CD8-positive, alpha-beta memory T cell (primary cell): ENCODE measurements at regions of chr12 and their contacts with region 1.

Region 1: GRCh38 chr12:52362118-52362726 is 5.1 kb downstream of the KRT85 start:
- DNase-seq: no peak
- H3K4me3 ChIP-seq: no peak overlapping the region
- H3K4me3 Mint-ChIP-seq: no peak overlapping the region
- H3K27ac ChIP-seq: no peak overlapping the region
- H3K27ac Mint-ChIP-seq: no peak overlapping the region
- H3K4me1 ChIP-seq: peaks cover 22% of the 10 kb centered on the region
- H3K4me1 Mint-ChIP-seq: peaks cover 28 to 48% (median 42%) of the 10 kb centered on the region in 3 donors
- H3K27me3 ChIP-seq: peaks cover 3% of the 10 kb centered on the region
- H3K27me3 Mint-ChIP-seq: peaks cover 4 to 9% of the 10 kb centered on the region in 2 donors

Region 2: DNA sequence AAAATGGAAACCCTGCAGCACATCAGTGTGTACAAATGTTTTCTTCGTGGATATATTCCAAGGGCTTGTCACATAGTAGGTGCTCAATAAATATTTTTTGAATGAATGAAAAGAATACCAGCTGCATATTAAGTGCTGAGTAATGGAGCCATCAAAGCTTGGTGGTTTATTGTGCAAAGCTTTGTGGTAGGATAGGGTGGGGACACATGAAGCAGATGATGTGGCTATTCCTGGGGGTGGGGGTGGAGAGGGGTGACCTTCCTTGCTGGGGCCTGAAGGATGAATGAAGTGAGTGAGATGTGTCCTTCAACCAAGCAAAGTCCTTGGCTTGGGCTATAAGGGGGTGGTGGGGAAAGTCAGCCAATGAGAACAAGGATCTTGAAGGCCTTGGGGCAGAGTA is 66.6 kb before region 1 on chr12:
- CTCF ChIA-PET with region 1: no interaction called
- POLR2A ChIA-PET with region 1: no interaction called
- DNase-seq: no peak
- H3K4me3 ChIP-seq: no peak overlapping the region
- H3K4me3 Mint-ChIP-seq: no peak overlapping the region
- H3K27ac ChIP-seq: no peak overlapping the region
- H3K27ac Mint-ChIP-seq: no peak overlapping the region
- H3K4me1 ChIP-seq: no peaks in the 10 kb centered on the region
- H3K4me1 Mint-ChIP-seq: no peaks in the 10 kb centered on the region
- H3K27me3 ChIP-seq: no peaks in the 10 kb centered on the region
- H3K27me3 Mint-ChIP-seq: peaks cover 12 to 40% of the 10 kb centered on the region in 2 donors

Region 3: DNA sequence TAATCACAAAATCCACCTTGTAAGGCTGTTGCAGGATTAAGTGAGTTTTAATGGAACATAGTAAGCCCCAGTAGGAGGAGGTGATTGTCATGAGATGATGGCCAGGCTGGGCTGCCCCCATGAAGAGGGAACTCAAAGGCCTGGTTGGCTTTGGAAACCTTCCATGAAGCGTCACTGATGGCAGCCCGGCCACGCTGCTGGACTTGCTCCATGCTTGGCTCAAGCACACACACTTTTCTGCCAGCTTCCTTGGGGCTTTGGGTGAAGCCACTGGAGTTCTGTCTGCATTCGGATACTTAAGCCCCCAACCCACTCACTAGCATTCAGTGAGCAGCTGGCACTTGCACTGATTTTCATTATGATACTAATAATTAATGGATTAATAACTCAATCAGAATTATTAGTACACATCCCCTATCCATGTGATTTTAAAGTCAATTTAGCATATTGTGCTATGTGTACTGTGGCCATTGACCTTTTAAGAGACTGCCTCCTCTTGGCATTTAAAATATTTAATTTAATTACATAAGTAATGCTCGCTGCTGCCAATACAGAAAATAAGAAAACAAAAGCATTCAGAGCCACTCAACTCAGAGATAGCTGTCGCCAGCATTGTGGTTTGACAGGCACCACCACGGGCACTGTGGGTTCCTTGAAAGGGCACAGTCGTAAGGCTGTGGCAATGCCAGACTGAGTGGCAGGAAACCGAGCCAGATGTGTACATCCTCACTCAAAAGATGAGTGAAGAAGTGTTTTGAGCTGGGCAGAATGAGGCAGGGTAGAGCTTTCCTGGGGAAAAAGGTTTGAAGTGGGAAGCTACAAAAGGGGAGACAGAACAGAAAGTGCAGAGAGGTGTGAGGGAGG is 10.8 kb before region 1 on chr12:
- CTCF ChIA-PET with region 1: interaction called, 13 read pairs
- POLR2A ChIA-PET with region 1: no interaction called
- DNase-seq: peak; percentile 43 to 87 (median 72)
- H3K4me3 ChIP-seq: no peak overlapping the region
- H3K4me3 Mint-ChIP-seq: peak overlapping the region in 6 of 7 donors; percentile 35 to 59 (median 50)
- H3K27ac ChIP-seq: no peak overlapping the region
- H3K27ac Mint-ChIP-seq: peak overlapping the region in 7 of 8 donors; percentile 0 to 69 (median 47)
- H3K4me1 ChIP-seq: peaks cover 21% of the 10 kb centered on the region
- H3K4me1 Mint-ChIP-seq: peaks cover 26 to 53% (median 40%) of the 10 kb centered on the region in 3 donors
- H3K27me3 ChIP-seq: no peaks in the 10 kb centered on the region
- H3K27me3 Mint-ChIP-seq: peaks cover 17 to 20% of the 10 kb centered on the region in 2 donors

Region 4: DNA sequence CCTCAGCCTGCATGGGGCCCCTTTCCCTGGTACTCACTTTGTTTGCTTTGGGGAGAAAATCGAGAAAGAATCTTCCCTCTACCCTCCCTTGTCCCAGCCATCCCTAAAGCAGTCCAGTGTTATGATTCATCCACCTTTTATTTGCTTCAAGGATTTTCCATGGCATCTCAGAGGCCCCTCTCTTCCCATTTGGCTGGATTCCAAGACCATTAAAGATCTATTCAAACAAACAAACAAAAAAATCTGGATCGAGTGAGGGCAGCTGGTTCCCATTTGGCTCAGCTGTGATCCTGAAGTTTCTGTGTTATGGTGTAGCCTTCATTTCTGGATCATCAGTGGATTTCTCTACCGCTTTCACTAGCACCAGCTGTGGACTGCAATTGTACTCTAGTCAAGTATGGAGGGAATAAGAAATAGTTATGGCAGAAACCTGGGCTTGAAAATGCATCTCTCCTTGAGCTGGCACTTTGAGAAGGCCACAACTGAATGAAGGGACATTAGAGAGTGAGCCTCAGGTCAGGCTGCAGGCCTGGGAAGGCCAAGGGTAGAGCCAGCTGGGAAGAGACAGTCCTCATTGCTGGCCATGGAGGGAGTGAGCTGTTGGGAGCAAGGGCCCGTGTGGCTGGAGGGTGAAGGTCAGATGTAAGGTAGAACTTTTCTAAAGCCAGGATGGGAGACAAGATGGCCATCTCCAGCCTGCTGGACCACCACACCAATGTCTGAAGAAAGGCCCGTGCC is 177.0 kb after region 1 on chr12:
- CTCF ChIA-PET with region 1: no interaction called
- POLR2A ChIA-PET with region 1: no interaction called
- DNase-seq: no peak
- H3K4me3 ChIP-seq: no peak overlapping the region
- H3K4me3 Mint-ChIP-seq: no peak overlapping the region
- H3K27ac ChIP-seq: no peak overlapping the region
- H3K27ac Mint-ChIP-seq: no peak overlapping the region
- H3K4me1 ChIP-seq: no peaks in the 10 kb centered on the region
- H3K4me1 Mint-ChIP-seq: peaks cover 0 to 6% (median 0%) of the 10 kb centered on the region in 3 donors
- H3K27me3 ChIP-seq: no peaks in the 10 kb centered on the region
- H3K27me3 Mint-ChIP-seq: peaks cover 4 to 11% of the 10 kb centered on the region in 2 donors

Region 5: GRCh38 chr12:52585946-52586345 is 223.7 kb after region 1 on chr12:
- CTCF ChIA-PET with region 1: no interaction called
- POLR2A ChIA-PET with region 1: no interaction called
- DNase-seq: peak; percentile 39 to 88 (median 62)
- H3K4me3 ChIP-seq: no peak overlapping the region
- H3K4me3 Mint-ChIP-seq: peak overlapping the region in 3 of 7 donors; percentile 1 to 26 (median 25)
- H3K27ac ChIP-seq: no peak overlapping the region
- H3K27ac Mint-ChIP-seq: peak overlapping the region in 7 of 8 donors; percentile 10 to 91 (median 78)
- H3K4me1 ChIP-seq: peaks cover 45% of the 10 kb centered on the region
- H3K4me1 Mint-ChIP-seq: peaks cover 18 to 36% (median 33%) of the 10 kb centered on the region in 3 donors
- H3K27me3 ChIP-seq: no peaks in the 10 kb centered on the region
- H3K27me3 Mint-ChIP-seq: peaks cover 4 to 7% of the 10 kb centered on the region in 2 donors